ENCODE measurements at regions of chr6 and their contacts with region 1.

Region 1: GRCh38 chr6:154435400-154435945 is 75.0 kb downstream of the CNKSR3 start:
- DNase-seq: no peak
- ATAC-seq: no peak
- H3K4me3 ChIP-seq: no peak overlapping the region
- H3K27ac ChIP-seq: no peak overlapping the region
- H3K4me1 ChIP-seq: peaks cover 7 to 25% of the 10 kb centered on the region in 2 experiments
- H3K27me3 ChIP-seq: no peaks in the 10 kb centered on the region
- CTCF ChIP-seq: no peak
- EP300 ChIP-seq: no peak
- POLR2A ChIP-seq: no peak
- RAD21 ChIP-seq: no peak

Region 2: DNA sequence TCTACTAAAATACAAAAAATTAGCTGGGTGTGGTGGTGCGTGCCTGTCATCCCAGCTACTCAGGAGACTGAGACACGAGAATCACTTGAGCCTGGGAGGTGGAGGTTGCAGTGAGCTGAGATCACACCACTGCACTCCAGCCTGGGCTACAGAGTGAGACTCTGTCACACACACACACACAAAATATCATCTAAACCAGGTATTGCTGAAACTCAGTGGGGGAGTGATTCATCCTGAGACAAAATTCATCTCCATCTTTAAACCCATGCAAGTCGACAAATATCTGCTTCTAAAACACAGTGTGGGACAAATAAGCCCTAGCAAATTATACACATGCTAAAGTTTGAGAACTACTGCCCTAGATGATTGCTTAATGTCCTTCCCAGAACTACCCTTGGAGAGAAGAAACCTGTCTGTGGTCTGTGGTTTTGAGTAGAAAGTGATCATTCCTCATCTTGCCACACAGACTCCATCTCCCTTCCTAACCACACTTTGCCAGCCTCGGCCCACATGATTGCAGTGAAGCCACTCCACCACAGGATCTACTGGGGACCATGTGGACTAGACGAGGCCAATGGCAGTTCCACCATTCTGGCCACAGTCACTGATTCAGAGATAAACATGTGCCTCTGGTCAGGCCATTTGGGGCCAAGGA is 266.2 kb before region 1 on chr6:
- CTCF ChIA-PET with region 1: no interaction called
- POLR2A ChIA-PET with region 1: no interaction called
- in situ Hi-C with region 1: no loop called
- intact Hi-C with region 1: no loop called
- DNase-seq: no peak
- ATAC-seq: no peak
- H3K4me3 ChIP-seq: no peak overlapping the region
- H3K27ac ChIP-seq: no peak overlapping the region
- H3K4me1 ChIP-seq: no peaks in the 10 kb centered on the region
- H3K27me3 ChIP-seq: no peaks in the 10 kb centered on the region
- CTCF ChIP-seq: no peak
- EP300 ChIP-seq: no peak
- POLR2A ChIP-seq: no peak
- RAD21 ChIP-seq: no peak

Region 3: GRCh38 chr6:154329350-154330170 is 105.9 kb before region 1 on chr6:
- CTCF ChIA-PET with region 1: no interaction called
- POLR2A ChIA-PET with region 1: no interaction called
- in situ Hi-C with region 1: no loop called
- intact Hi-C with region 1: no loop called
- DNase-seq: no peak
- ATAC-seq: peak; percentile 63; the same call in 2 of the 3 replicates
- H3K4me3 ChIP-seq: no peak overlapping the region
- H3K27ac ChIP-seq: no peak overlapping the region
- H3K4me1 ChIP-seq: no peaks in the 10 kb centered on the region
- H3K27me3 ChIP-seq: no peaks in the 10 kb centered on the region
- CTCF ChIP-seq: no peak
- EP300 ChIP-seq: no peak
- POLR2A ChIP-seq: no peak
- RAD21 ChIP-seq: no peak

Region 4: GRCh38 chr6:154500769-154501577 is 65.5 kb after region 1 on chr6:
- CTCF ChIA-PET with region 1: no interaction called
- POLR2A ChIA-PET with region 1: no interaction called
- in situ Hi-C with region 1: no loop called
- intact Hi-C with region 1: loop called (anchors 5 kb)
- DNase-seq: peak in 3 of 4 experiments; percentile 40 to 62 (median 57)
- ATAC-seq: peak; percentile 85
- H3K4me3 ChIP-seq: no peak overlapping the region
- H3K27ac ChIP-seq: no peak overlapping the region
- H3K4me1 ChIP-seq: peaks cover 5 to 6% of the 10 kb centered on the region in 2 experiments; a peak in 4 of 5 replicates
- H3K27me3 ChIP-seq: no peaks in the 10 kb centered on the region
- CTCF ChIP-seq: peak; percentile 75 to 82 (median 77)
- EP300 ChIP-seq: no peak
- POLR2A ChIP-seq: no peak
- RAD21 ChIP-seq: peak; percentile 34 to 49; a peak in 3 of 4 replicates

Measured in K562 (cell line).